B cell (primary cell): ENCODE measurements at regions of chr5 and their contacts with region 1.

Region 1: DNA sequence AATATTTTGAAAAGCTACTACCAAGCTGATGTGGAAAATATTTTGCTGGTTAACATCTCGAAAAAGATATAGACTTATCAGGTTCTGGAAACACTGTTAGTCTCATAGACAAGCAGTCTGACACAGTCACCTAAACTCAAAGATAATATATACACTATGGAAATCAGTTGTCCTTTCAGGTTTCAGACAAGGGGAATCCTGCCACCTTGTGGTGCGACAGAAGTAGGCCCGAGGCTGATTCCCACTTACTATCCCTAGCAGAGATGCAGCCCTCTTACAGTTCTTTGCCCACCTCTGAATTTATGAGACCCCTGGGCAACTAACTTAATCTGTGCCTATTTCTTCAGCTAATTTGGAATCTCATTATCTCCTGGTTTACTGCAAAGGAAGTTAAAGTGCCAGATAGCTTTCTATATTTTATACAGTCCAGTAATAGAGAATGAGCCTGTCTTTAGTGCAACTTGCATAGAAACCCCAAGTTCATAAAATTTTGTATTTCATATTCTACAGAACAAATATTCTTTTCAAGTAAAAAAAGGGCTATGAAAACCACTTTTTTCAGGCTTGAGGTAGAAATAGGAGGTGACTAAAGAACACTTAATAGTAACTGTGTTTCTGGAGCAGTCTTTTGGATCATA is 16.9 kb downstream of the RAD1 start:
- DNase-seq: peak; percentile 73
- ATAC-seq: peak; percentile 73
- H3K4me3 ChIP-seq: no peak overlapping the region
- H3K4me3 Mint-ChIP-seq: no peak overlapping the region
- H3K27ac ChIP-seq: no peak overlapping the region
- H3K27ac Mint-ChIP-seq: no peak overlapping the region
- H3K4me1 ChIP-seq: no peaks in the 10 kb centered on the region
- H3K4me1 Mint-ChIP-seq: no peaks in the 10 kb centered on the region
- H3K27me3 ChIP-seq: no peaks in the 10 kb centered on the region
- H3K27me3 Mint-ChIP-seq: no peaks in the 10 kb centered on the region
- CTCF ChIP-seq: peak; percentile 92

Region 2: GRCh38 chr5:34474573-34475021 is 423.8 kb before region 1 on chr5:
- CTCF ChIA-PET with region 1: interaction called, 14 read pairs
- POLR2A ChIA-PET with region 1: no interaction called
- intact Hi-C with region 1: loop called (anchors 1 kb)
- DNase-seq: peak; percentile 50
- ATAC-seq: peak; percentile 69
- H3K4me3 ChIP-seq: no peak overlapping the region
- H3K4me3 Mint-ChIP-seq: no peak overlapping the region
- H3K27ac ChIP-seq: no peak overlapping the region
- H3K27ac Mint-ChIP-seq: no peak overlapping the region
- H3K4me1 ChIP-seq: no peaks in the 10 kb centered on the region
- H3K4me1 Mint-ChIP-seq: peaks cover 4% of the 10 kb centered on the region
- H3K27me3 ChIP-seq: peaks cover 0 to 5% (median 0%) of the 10 kb centered on the region in 4 experiments
- H3K27me3 Mint-ChIP-seq: peaks cover 21% of the 10 kb centered on the region
- CTCF ChIP-seq: peak; percentile 98

Region 3: GRCh38 chr5:34656001-34656699 is 242.2 kb before region 1 on chr5 and contains the start of gene RAI14:
- CTCF ChIA-PET with region 1: interaction called, 6 read pairs
- POLR2A ChIA-PET with region 1: no interaction called
- intact Hi-C with region 1: loop called (anchors 10 kb)
- DNase-seq: peak; percentile 36
- ATAC-seq: peak; percentile 37
- H3K4me3 ChIP-seq: peak within 1 kb of the TSS; percentile 40 to 77 (median 59)
- H3K4me3 Mint-ChIP-seq: peak within 1 kb of the TSS; percentile 92
- H3K27ac ChIP-seq: no peak within 1 kb of the TSS
- H3K27ac Mint-ChIP-seq: peak within 1 kb of the TSS; percentile 57
- H3K4me1 ChIP-seq: peaks cover 14 to 20% of the 10 kb centered on the region in 2 donors
- H3K4me1 Mint-ChIP-seq: peaks cover 24% of the 10 kb centered on the region
- H3K27me3 ChIP-seq: peaks cover 0 to 29% (median 12%) of the 10 kb centered on the region in 4 experiments
- H3K27me3 Mint-ChIP-seq: peaks cover 55% of the 10 kb centered on the region
- CTCF ChIP-seq: no peak
- total RNA-seq, gene RAI14: 0.66 and 1.9 TPM in 2 replicates

Region 4: DNA sequence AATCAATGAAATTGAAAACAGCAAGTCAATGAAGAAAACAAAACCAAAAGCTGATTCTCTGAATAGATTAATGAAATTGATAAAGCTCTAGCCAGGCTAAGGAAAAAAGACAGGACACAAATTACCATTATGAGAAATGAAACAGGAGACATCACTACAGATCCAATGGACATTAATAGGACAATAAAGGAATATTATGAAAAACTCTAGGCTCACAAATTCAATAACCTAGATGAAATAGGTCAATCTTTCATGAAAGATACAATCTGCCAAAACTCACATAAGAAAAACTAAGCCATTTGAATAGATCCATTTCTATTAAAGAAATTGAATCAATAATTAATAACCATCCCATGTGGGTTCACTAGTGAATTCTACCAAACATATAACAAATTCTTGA is 22.1 kb before region 1 on chr5:
- CTCF ChIA-PET with region 1: no interaction called
- POLR2A ChIA-PET with region 1: no interaction called
- intact Hi-C with region 1: no loop called
- DNase-seq: no peak
- ATAC-seq: no peak
- H3K4me3 ChIP-seq: no peak overlapping the region
- H3K4me3 Mint-ChIP-seq: no peak overlapping the region
- H3K27ac ChIP-seq: no peak overlapping the region
- H3K27ac Mint-ChIP-seq: no peak overlapping the region
- H3K4me1 ChIP-seq: no peaks in the 10 kb centered on the region
- H3K4me1 Mint-ChIP-seq: no peaks in the 10 kb centered on the region
- H3K27me3 ChIP-seq: no peaks in the 10 kb centered on the region
- H3K27me3 Mint-ChIP-seq: peaks cover 4% of the 10 kb centered on the region
- CTCF ChIP-seq: no peak

Region 5: GRCh38 chr5:34915139-34915855 is 16.9 kb after region 1 on chr5 and contains the starts of genes BRIX1 and RAD1:
- CTCF ChIA-PET with region 1: interaction called, 19 read pairs
- POLR2A ChIA-PET with region 1: no interaction called
- intact Hi-C with region 1: no loop called
- DNase-seq: peak; percentile 97
- ATAC-seq: peak; percentile 99
- H3K4me3 ChIP-seq: peak within 1 kb of the TSS; percentile 82 to 99 (median 87)
- H3K4me3 Mint-ChIP-seq: no peak within 1 kb of the TSS
- H3K27ac ChIP-seq: peak within 1 kb of the TSS; percentile 57 to 80
- H3K27ac Mint-ChIP-seq: peak within 1 kb of the TSS; percentile 63
- H3K4me1 ChIP-seq: peaks cover 23 to 26% of the 10 kb centered on the region in 2 donors
- H3K4me1 Mint-ChIP-seq: peaks cover 32% of the 10 kb centered on the region
- H3K27me3 ChIP-seq: no peaks in the 10 kb centered on the region
- H3K27me3 Mint-ChIP-seq: no peaks in the 10 kb centered on the region
- CTCF ChIP-seq: no peak
- total RNA-seq, gene BRIX1: 26.4 and 29.3 TPM in 2 replicates
- total RNA-seq, gene RAD1: 25.9 and 26.1 TPM in 2 replicates